Mucosa of descending colon (tissue), 3 donors: ENCODE measurements at regions of chr6 and their contacts with region 1.

Region 1: GRCh38 chr6:132512638-132513632 is at the start of gene STX7:
- DNase-seq: peak; percentile 90 to 94 (median 93)
- ATAC-seq: peak; percentile 97
- H3K4me3 ChIP-seq: peak within 1 kb of the TSS; percentile 72
- H3K4me1 ChIP-seq: peaks cover 11% of the 10 kb centered on the region
- CTCF ChIP-seq: no peak
- total RNA-seq, gene STX7: 51.9 to 66.9 (median 63.2) TPM

Region 2: GRCh38 chr6:132813173-132813856 is 300.4 kb after region 1 on chr6:
- intact Hi-C with region 1: loop called in 1 of 2 experiments (anchors 5 kb)
- DNase-seq: peak; percentile 55 to 70 (median 65)
- ATAC-seq: peak; percentile 18
- H3K4me3 ChIP-seq: peak overlapping the region; percentile 84
- H3K4me1 ChIP-seq: peaks cover 9% of the 10 kb centered on the region
- CTCF ChIP-seq: no peak